Calu3 (cell line): ENCODE measurements at regions of chr18 and their contacts with region 1.

Region 1: DNA sequence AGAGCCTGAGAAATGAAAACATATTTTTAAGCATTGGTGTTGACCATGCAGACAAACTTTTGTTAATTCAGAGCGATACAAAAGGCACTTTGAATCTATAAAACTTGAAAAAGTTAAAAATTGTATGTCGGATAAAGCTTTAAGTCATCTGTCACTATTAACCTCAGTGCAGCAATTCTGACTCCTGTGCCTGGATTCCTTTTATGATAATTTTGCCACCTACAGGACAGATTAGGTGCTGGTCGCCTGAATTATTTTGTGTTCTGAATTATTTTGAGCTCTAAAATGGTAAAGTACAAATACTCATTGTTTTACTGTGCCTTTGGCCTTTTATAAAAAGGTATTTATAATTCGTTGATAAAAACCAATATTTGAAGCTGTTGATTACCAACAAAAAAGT is 19.4 kb upstream of the RNF138 start:
- DNase-seq: no peak
- H3K4me3 Mint-ChIP-seq: no peak overlapping the region
- H3K27ac Mint-ChIP-seq: no peak overlapping the region
- H3K4me1 Mint-ChIP-seq: no peaks in the 10 kb centered on the region
- H3K27me3 Mint-ChIP-seq: no peaks in the 10 kb centered on the region
- CTCF ChIP-seq: peak; percentile 59

Region 2: GRCh38 chr18:31950583-31950982 is 121.7 kb before region 1 on chr18:
- CTCF ChIA-PET with region 1: no interaction called
- intact Hi-C with region 1: no loop called
- DNase-seq: peak; percentile 9
- H3K4me3 Mint-ChIP-seq: peak overlapping the region; percentile 22
- H3K27ac Mint-ChIP-seq: peak overlapping the region; percentile 34
- H3K4me1 Mint-ChIP-seq: peaks cover 35% of the 10 kb centered on the region
- H3K27me3 Mint-ChIP-seq: no peaks in the 10 kb centered on the region
- CTCF ChIP-seq: no peak

Region 3: DNA sequence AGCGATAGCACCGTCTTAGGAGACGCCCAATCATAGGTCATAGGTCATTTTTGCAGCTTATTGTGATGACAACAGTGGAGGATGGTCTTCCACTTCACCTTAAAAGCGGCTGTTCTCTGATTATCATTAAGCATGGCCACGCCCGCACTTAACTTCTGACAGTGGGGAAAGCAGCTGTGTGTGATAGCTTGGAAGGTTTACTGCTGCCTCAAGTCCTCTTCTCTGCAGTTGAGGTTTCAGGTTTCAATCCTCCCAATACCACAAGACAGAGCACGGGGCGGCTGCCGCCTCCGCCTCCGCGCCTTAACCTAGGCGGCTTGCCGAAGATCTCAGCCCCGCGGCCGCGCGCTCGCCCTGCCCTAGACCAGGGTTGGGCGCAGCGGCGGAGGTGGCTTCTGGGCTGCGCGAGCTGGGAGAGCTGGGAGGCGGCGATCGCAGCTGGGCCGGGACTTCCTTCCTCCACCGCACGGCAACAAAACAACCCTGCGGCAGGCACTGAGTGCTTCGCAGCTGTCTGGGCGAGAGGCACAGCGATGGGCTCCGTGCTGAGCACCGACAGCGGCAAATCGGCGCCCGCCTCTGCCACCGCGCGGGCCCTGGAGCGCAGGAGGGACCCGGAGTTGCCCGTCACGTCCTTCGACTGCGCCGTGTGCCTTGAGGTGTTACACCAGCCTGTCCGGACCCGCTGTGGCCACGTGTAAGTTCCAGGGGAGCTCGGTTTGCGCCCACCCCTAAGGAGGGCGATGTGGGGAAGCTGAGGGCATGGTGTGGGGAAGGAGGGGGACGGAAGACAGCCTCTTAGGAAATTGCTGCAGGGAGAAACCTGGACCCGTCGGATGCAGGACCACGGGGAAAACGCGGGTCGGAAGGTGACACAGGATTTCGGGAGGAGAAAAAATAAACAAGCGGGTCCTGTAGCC is 53.7 kb before region 1 on chr18 and contains the start of gene RNF125:
- CTCF ChIA-PET with region 1: no interaction called
- intact Hi-C with region 1: loop called (anchors 1 kb)
- DNase-seq: peak; percentile 76
- H3K4me3 Mint-ChIP-seq: peak within 1 kb of the TSS; percentile 92
- H3K27ac Mint-ChIP-seq: peak within 1 kb of the TSS; percentile 59
- H3K4me1 Mint-ChIP-seq: peaks cover 15% of the 10 kb centered on the region
- H3K27me3 Mint-ChIP-seq: peaks cover 22% of the 10 kb centered on the region
- CTCF ChIP-seq: no peak
- total RNA-seq, gene RNF125: 0.50 and 0.98 TPM in 2 replicates